HEK293T (cell line): ENCODE measurements at regions of chr19 and their contacts with region 1.

Region 1: DNA sequence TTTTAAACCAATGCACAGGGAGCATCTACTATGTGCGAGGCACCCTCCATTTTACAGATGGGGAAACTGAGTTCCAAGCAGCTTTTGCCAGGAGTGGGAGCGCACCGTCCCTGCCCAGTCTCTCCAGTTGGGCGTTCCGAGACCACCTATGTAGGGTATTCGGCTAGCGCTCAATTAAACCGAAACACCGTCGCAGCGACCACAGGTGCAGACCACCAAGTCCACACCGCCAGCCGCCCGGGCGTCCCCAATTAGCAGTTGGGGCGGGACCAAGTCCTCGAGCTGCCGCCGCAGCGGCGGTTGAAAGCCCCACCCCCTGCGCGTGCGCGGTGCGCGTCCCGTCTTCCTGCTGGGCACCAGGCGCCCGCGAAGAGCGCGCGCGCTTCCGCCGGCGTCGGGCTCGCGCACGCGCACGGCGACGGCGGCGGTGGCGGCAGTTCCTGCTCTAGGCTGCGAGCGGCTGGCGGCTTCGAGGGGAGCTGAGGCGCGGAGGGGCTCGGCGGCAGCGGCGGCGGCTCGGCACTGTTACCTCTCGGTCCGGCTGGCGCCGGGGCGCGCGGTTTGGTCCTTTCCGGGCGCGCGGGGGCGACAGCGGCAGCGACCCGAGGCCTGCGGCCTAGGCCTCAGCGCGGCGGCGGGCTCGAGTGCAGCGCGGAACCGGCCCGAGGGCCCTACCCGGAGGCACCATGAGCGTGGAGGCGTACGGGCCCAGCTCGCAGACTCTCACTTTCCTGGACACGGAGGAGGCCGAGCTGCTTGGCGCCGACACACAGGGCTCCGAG is at the start of gene UPF1:
- DNase-seq: peak; percentile 97

Region 2: GRCh38 chr19:18710996-18711751 is 120.5 kb before region 1 on chr19:
- CTCF ChIA-PET with region 1: no interaction called
- POLR2A ChIA-PET with region 1: no interaction called
- DNase-seq: no peak

Region 3: DNA sequence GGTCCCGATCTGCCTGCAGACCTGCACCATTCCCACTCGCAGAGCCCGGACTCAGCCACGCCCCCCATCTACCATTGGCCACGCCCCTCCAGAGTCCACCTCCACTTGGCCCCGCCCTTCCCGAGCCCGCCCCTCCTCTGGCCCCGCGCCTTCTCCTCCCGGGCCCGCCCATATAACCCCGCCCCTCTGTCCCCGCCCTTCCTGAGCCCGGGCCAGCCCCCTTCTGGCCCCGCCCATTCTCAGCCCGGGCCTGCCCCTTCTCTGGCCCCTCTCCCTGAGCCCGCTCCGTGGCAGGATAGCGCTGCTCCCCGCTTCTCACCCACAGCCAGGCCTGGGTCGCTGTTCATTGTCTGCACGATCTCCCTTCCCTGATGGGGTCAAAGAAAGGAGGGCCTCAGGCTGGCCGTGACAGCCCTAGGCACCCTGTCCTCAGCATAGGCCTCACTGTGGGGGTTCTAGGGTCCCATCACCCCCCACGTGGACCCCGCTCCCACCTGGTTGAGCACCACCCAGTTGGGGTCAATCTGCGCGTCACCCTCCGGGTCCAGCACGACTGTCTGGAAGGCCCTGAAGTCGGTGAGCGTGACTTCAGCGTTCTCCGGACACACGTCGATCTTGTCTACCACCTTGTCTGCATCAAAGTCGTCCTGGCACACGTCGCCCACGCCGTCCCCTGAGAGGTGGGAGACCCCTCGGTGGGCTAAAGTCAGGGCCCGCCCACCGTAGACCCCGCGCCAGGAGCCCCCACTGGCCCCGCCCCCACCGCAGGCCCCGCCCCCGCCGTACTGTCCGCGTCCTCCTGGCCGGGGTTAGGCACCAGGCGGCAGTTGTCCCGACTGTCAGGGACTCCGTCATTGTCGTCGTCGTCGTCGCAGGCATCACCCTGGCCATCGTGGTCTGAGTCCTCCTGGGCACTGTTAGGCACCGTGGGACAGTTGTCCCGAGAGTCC is 46.3 kb before region 1 on chr19:
- CTCF ChIA-PET with region 1: no interaction called
- POLR2A ChIA-PET with region 1: interaction called, 10 read pairs
- DNase-seq: peak; percentile 100

Region 4: DNA sequence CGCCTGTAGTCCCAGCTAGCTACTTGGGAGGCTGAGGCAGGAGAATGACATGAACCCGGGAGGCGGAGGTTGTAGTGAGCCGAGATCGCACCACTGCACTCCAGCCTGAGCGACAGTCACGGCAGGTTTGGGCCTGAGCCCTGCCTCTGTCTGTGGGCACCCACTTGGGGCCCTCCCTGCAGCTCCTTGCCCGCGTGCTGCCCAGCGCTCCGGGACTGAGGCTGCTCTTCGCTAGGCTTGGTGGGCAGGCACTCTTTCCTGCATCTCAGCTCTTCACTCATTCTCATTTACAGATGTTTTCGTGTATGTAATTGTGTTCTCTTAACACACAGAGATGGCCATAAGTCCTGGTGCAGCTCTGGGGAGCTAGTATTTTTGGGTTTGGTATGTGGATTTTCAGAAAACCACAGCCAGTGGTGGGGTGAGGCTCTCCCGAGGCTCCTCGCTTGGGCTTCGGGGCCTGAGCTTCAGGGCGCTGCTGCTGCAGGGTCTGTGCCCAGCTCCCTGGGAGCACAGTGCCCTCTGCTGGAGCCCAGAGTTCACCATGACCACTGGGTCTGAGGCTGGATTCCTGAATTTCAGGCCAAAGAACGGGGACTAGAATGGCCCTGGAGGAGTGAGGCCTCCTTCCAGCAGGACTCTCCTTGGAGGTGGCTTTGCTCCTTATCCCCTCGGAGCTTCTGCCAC is 15.3 kb after region 1 on chr19:
- CTCF ChIA-PET with region 1: interaction called, 6 read pairs
- POLR2A ChIA-PET with region 1: interaction called, 42 read pairs
- DNase-seq: peak; percentile 78

Region 5: GRCh38 chr19:19203012-19203856 is 371.5 kb after region 1 on chr19 and contains the start of gene NR2C2AP:
- CTCF ChIA-PET with region 1: interaction called, 10 read pairs
- POLR2A ChIA-PET with region 1: no interaction called
- DNase-seq: peak; percentile 96